OCI-LY7 (cell line): ENCODE measurements at regions of chr5 and their contacts with region 1.

Region 1: DNA sequence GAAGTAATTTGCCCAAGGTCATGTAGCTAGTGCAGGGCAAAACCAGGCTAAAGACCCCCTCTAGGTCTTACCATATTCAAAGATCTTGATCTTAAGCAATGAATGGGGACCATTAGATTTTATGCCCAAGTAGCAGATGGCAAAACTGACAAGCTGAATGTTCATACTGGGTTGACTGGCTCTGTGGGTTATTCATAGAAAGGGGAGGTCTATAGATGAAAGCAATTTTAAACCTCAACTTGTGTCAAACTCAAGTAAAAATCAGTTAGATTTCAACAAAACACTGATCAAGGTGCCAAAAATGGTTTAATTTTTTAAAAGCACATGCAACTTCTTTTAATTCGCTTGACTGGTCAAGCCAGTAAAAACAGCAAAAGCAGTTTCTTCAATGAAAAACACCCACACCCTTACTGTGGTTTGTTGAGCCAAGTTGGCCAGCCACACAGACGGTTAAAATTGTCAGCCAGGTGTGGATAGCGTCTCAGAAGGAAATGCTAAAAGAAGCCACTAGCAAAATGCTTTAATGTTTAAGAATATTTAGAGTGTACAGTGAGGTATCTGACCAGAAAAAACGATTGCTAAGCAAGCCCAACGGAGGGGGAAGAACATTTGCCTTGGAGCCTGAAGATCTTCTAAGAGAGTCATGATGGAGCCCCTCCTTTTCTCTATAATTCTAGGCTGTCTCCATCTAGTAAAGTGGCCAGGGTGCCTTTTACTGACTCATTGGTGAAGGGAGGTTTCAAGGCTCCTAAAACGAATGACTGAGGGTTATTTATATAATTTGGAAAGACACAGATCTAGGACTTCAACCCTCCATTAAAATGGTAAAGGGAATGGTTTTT is 539.6 kb upstream of the CLINT1 start:
- DNase-seq: peak; percentile 99
- H3K4me3 ChIP-seq: peak overlapping the region; percentile 31
- H3K27ac ChIP-seq: peak overlapping the region; percentile 95
- H3K4me1 ChIP-seq: peaks cover 54% of the 10 kb centered on the region
- CTCF ChIP-seq: no peak

Region 2: DNA sequence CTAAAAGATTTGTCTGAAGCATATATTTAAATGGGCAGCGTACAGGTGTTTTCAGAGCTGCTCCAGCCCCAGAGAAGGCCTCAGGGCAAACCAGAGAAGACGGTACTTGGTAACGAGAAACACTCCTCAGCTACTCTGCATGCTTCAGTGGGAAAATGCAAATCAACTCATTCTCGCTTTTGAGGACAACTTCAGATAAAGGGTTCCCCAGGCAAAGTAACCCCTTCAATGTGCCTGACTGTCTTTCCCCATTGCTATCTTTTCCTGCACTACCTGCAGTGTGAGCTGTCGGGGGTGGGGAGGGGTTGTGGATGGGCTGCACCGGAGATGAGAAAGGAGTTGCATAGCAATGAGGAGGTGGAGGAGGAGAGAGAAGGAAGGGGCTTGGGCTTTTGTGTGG is 199.9 kb before region 1 on chr5:
- CTCF ChIA-PET with region 1: no interaction called
- POLR2A ChIA-PET with region 1: no interaction called
- intact Hi-C with region 1: loop called (anchors 1 kb)
- DNase-seq: peak; percentile 91
- H3K4me3 ChIP-seq: peak overlapping the region; percentile 44
- H3K27ac ChIP-seq: peak overlapping the region; percentile 87
- H3K4me1 ChIP-seq: peaks cover 78% of the 10 kb centered on the region
- CTCF ChIP-seq: no peak

Region 3: DNA sequence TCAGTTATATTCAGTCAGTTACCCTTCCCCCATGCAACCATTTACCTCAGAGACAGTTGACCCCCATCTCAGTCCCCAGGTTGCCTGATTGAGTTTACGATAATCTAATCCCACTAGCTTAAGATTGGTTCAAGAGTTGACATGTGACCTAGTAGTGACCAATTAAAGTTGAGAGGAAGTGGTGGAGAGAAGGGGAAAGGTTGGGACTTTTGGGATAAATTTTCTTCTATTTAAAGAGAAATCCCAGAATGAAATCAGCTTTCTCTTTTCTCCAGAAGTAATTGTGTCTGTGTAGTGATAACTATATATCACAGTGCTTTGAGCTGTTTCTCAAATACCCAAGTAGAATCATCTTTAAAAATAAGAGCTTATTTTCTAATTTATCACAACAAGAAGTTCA is 143.0 kb before region 1 on chr5:
- CTCF ChIA-PET with region 1: no interaction called
- POLR2A ChIA-PET with region 1: no interaction called
- intact Hi-C with region 1: no loop called
- DNase-seq: no peak
- H3K4me3 ChIP-seq: no peak overlapping the region
- H3K27ac ChIP-seq: no peak overlapping the region
- H3K4me1 ChIP-seq: no peaks in the 10 kb centered on the region
- CTCF ChIP-seq: no peak

Region 4: GRCh38 chr5:158287643-158288271 is 110.8 kb before region 1 on chr5:
- CTCF ChIA-PET with region 1: no interaction called
- POLR2A ChIA-PET with region 1: interaction called, 3 read pairs
- intact Hi-C with region 1: loop called (anchors 1 kb)
- DNase-seq: no peak
- H3K4me3 ChIP-seq: no peak overlapping the region
- H3K27ac ChIP-seq: no peak overlapping the region
- H3K4me1 ChIP-seq: peaks cover 22% of the 10 kb centered on the region
- CTCF ChIP-seq: no peak

Region 5: GRCh38 chr5:158435161-158435616 is 36.6 kb after region 1 on chr5:
- CTCF ChIA-PET with region 1: no interaction called
- POLR2A ChIA-PET with region 1: interaction called, 3 read pairs
- intact Hi-C with region 1: loop called (anchors 1 kb)
- DNase-seq: peak; percentile 68
- H3K4me3 ChIP-seq: no peak overlapping the region
- H3K27ac ChIP-seq: peak overlapping the region; percentile 62
- H3K4me1 ChIP-seq: peaks cover 73% of the 10 kb centered on the region
- CTCF ChIP-seq: no peak

Region 6: DNA sequence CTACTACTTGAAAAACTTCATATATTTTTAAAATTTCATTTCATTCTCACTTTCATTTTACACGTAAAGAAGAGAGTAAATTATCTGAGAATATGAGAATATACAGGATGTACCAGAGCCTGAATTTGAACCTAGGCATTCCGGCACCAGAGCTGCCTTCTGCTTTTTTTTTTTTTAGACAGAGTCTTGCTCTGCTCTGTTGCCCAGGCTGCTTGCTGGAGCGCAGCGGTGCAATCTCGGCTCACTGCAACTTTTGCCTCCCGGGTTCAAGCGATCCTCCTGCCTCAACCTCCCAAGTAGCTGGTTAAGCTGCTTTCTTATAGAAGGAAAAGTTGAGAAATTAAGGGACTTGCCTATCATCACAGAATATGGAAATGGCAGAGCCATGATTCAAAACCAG is 161.1 kb after region 1 on chr5:
- CTCF ChIA-PET with region 1: no interaction called
- POLR2A ChIA-PET with region 1: no interaction called
- intact Hi-C with region 1: loop called (anchors 5 kb)
- DNase-seq: peak; percentile 68
- H3K4me3 ChIP-seq: peak overlapping the region; percentile 25
- H3K27ac ChIP-seq: no peak overlapping the region
- H3K4me1 ChIP-seq: peaks cover 33% of the 10 kb centered on the region
- CTCF ChIP-seq: no peak

Region 7: GRCh38 chr5:158609333-158610050 is 210.9 kb after region 1 on chr5:
- CTCF ChIA-PET with region 1: no interaction called
- POLR2A ChIA-PET with region 1: no interaction called
- intact Hi-C with region 1: no loop called
- DNase-seq: no peak
- H3K4me3 ChIP-seq: no peak overlapping the region
- H3K27ac ChIP-seq: no peak overlapping the region
- H3K4me1 ChIP-seq: no peaks in the 10 kb centered on the region
- CTCF ChIP-seq: no peak

Region 8: GRCh38 chr5:158676642-158677469 is 278.3 kb after region 1 on chr5:
- CTCF ChIA-PET with region 1: no interaction called
- POLR2A ChIA-PET with region 1: no interaction called
- intact Hi-C with region 1: loop called (anchors 1 kb)
- DNase-seq: peak; percentile 85
- H3K4me3 ChIP-seq: peak overlapping the region; percentile 48
- H3K27ac ChIP-seq: peak overlapping the region; percentile 73
- H3K4me1 ChIP-seq: peaks cover 30% of the 10 kb centered on the region
- CTCF ChIP-seq: peak; percentile 93

Region 9: DNA sequence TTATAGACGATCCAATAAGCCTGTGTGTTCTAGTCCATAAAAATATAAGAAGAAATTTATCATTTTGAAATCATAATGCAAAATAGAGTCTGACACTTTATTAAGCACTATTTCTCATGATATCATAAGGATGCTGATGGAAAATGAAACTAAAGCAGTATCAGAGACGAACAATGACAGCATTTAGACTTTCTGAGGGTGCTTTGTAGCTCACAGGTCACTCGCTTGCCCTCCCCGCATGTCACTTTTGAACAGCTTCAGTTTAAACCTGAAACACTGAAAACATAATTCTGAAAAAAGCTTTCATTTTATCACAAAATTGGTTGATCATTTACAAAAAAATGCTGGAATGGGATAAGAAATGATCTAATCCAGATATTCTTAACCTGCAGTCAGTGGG is 454.0 kb after region 1 on chr5:
- CTCF ChIA-PET with region 1: no interaction called
- POLR2A ChIA-PET with region 1: no interaction called
- intact Hi-C with region 1: no loop called
- DNase-seq: no peak
- H3K4me3 ChIP-seq: no peak overlapping the region
- H3K27ac ChIP-seq: no peak overlapping the region
- H3K4me1 ChIP-seq: peaks cover 60% of the 10 kb centered on the region
- CTCF ChIP-seq: no peak

Region 10: DNA sequence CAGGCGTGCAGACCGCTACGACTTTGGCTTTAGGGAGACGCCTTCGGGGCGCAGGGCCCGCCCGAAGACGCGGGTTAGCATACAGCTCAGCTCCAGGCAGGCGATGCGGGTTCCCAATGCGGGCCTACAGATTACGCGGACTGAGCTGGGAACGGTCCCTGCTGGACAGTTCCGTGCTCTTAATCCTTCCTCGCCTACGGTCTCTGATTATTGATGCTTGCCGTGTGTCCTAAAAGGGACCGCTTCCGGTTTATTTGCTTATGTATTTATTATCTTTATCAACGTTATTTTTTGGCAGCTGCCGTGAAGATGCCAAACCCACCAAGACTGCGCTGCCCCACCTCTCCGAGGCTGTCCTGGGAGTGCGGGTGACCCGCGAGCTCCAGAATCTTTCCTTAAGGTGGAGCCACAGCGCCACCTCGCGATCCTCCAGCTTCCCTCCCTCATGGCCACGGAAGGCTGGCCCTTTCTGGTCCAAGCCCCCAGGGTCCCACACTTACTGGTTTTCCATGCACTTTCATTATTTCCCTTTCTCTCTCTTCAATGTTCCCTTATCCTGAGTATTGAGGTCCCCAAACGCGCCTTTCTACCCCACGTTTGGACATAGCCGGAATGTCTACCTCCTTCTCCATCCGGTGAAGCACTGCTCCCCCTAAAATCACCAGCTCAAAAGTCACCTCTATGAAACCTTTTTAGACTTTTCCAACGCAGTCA is 708.1 kb after region 1 on chr5:
- CTCF ChIA-PET with region 1: no interaction called
- POLR2A ChIA-PET with region 1: no interaction called
- intact Hi-C with region 1: loop called (anchors 1 kb)
- DNase-seq: peak; percentile 89
- H3K4me3 ChIP-seq: peak overlapping the region; percentile 51
- H3K27ac ChIP-seq: peak overlapping the region; percentile 2
- H3K4me1 ChIP-seq: peaks cover 42% of the 10 kb centered on the region
- CTCF ChIP-seq: peak; percentile 96